Ascending aorta (tissue), 2 donors: ENCODE measurements at regions of chr3 and their contacts with region 1.

Region 1: DNA sequence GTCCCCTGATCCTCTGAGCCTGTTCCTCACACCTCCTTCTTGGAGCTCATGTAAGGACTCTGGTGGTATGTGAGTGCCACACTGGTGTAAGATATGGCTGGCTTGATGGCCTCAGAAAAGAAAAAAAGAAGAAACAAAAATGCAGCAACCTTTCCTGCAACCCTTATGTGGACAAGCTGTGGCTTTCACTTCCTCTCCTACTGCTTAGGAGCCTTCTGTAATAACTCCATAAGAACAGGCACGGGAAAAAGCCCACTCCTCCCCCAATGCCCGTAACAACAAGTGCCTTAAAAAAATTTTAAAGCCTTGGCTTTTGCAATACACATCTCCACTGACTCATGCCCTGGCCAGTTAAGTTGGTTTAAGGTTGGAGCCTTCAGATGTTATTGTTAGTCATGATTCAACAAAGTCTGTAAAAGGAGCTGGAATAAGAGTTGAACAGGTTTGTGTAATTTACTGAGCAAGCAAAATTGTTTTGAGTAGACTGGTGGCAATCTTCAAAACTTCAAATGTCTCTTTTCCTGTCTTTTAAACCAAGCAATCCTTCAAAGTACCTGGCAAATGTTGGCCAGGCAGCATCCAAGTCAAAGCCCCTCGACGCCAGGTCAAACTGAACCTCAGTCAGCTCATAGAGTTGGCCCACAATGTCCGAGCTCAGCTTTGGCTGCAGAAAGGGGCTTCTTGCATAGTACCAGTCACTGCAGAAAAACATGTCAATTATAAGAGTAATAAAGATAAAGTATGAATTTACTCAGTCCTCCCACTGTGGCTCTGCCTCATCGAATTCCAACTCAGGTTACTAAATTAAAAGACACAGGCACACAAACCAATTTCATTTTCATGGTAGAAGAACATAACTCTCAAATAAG is 22.9 kb downstream of the FYCO1 start:
- DNase-seq: peak in 1 of 2 donors; percentile 89
- H3K4me3 ChIP-seq: no peak overlapping the region
- H3K27ac ChIP-seq: peak overlapping the region; percentile 69 to 87
- H3K4me1 ChIP-seq: peaks cover 8 to 24% of the 10 kb centered on the region in 2 donors
- H3K27me3 ChIP-seq: no peaks in the 10 kb centered on the region
- CTCF ChIP-seq: no peak

Region 2: DNA sequence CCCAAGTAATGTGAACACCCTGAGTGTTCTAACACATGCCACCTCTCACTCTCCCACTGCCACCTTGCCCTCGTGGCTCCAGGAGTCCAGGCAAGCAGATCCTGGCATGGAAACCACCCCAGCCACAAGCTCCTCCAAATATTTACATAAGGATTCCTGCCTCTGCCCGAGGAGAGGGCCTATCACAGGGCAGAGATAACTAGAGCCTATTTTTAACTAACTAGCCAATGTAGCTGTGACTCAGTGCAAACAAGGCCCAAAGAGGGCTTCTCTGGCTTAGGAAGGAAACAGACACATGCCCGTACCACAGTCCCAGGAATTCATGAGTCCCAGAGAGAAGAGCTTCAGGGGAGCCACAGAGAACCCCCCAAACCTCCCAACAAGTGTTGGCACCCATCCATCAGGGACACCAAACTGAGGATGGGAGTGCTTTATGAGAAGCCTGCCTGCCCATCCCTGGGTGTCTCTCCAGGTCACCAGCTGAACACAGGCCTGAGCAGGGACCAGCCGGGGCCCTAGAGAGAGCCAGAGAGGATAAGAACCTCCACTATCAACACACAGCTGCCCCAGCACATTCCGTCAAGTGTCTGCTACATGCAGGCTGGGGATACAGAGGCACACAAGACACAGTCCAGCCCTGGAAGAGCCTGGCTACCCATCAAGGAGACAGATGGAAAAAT is 13.7 kb after region 1 on chr3:
- intact Hi-C with region 1: loop called (anchors 2 kb)
- DNase-seq: peak in 1 of 2 donors; percentile 90
- H3K4me3 ChIP-seq: peak overlapping the region in 1 of 2 donors; percentile 7
- H3K27ac ChIP-seq: peak overlapping the region; percentile 94 to 99
- H3K4me1 ChIP-seq: peaks cover 53 to 83% of the 10 kb centered on the region in 2 donors
- H3K27me3 ChIP-seq: no peaks in the 10 kb centered on the region
- CTCF ChIP-seq: no peak

Region 3: GRCh38 chr3:46693038-46693891 is 720.5 kb after region 1 on chr3 and contains the start of gene ALS2CL:
- intact Hi-C with region 1: no loop called
- DNase-seq: peak in 1 of 2 donors; percentile 81
- H3K4me3 ChIP-seq: peak within 1 kb of the TSS; percentile 74 to 89
- H3K27ac ChIP-seq: peak within 1 kb of the TSS; percentile 83 to 93
- H3K4me1 ChIP-seq: peaks cover 21 to 52% of the 10 kb centered on the region in 2 donors
- H3K27me3 ChIP-seq: no peaks in the 10 kb centered on the region
- CTCF ChIP-seq: no peak
- total RNA-seq, gene ALS2CL: 49.0 TPM